ENCODE measurements at regions of chr2 and their contacts with region 1.

Region 1: DNA sequence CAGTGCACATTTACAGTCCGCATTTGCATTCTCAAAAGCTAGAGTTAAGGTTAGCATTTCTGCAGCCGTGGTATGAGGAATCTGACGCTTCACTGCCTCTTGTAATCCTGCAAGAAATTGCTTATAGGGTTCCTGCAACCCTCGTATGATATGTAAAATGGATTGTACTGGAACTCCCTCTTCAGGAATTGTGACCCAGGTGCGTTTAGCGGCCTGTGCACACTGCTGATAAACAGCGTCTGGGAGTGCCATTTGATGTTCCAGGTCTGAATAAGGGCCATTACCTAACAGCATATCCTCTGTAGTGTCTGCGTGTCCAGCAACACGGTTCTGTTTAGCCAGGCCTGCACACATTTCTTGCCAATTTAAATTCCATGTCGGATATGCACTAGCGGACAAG is 42.5 kb downstream of the CXCR4 start:
- DNase-seq: no peak
- ATAC-seq: no peak
- H3K4me3 ChIP-seq: no peak overlapping the region
- H3K27ac ChIP-seq: no peak overlapping the region
- H3K4me1 ChIP-seq: no peaks in the 10 kb centered on the region
- H3K27me3 ChIP-seq: no peaks in the 10 kb centered on the region
- CTCF ChIP-seq: no peak
- EP300 ChIP-seq: no peak
- POLR2A ChIP-seq: no peak
- RAD21 ChIP-seq: no peak

Region 2: GRCh38 chr2:135974036-135974435 is 101.4 kb before region 1 on chr2:
- CTCF ChIA-PET with region 1: no interaction called
- POLR2A ChIA-PET with region 1: no interaction called
- RAD21 ChIA-PET with region 1: no interaction called
- SMC1A ChIA-PET with region 1: no interaction called
- in situ Hi-C with region 1: no loop called
- intact Hi-C with region 1: no loop called
- DNase-seq: no peak
- ATAC-seq: no peak
- H3K4me3 ChIP-seq: no peak overlapping the region
- H3K27ac ChIP-seq: no peak overlapping the region
- H3K4me1 ChIP-seq: no peaks in the 10 kb centered on the region
- H3K27me3 ChIP-seq: no peaks in the 10 kb centered on the region
- CTCF ChIP-seq: no peak
- EP300 ChIP-seq: no peak
- POLR2A ChIP-seq: no peak
- RAD21 ChIP-seq: no peak

Region 3: DNA sequence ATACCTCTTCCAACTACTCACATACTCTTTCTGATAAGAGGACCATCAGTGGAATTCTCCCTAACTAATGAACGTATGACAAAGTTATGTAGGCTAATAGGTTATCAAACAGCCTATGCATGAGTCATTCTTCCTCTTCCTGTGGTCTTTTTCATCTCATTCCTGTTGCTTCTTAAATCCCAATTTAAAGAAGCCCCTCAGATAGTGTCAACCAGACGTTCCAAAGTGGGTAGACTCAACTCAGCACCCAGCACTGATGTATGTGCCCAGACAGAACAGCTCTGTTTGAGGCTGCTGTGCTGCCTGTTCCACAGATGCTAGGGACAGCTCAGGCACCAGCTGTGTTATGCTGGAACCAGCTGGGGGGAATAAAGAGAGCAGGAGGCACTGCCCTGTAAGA is 10.1 kb before region 1 on chr2:
- CTCF ChIA-PET with region 1: interaction called, 4 read pairs
- POLR2A ChIA-PET with region 1: interaction called, 39 read pairs
- RAD21 ChIA-PET with region 1: interaction called, 57 read pairs
- SMC1A ChIA-PET with region 1: interaction called, 113 read pairs
- in situ Hi-C with region 1: no loop called
- intact Hi-C with region 1: no loop called
- DNase-seq: no peak
- ATAC-seq: peak; percentile 66
- H3K4me3 ChIP-seq: no peak overlapping the region
- H3K27ac ChIP-seq: no peak overlapping the region
- H3K4me1 ChIP-seq: peaks cover 12% of the 10 kb centered on the region
- H3K27me3 ChIP-seq: peaks cover 0 to 3% of the 10 kb centered on the region in 2 experiments; a peak in 1 of 4 replicates
- CTCF ChIP-seq: no peak
- EP300 ChIP-seq: no peak
- POLR2A ChIP-seq: no peak
- RAD21 ChIP-seq: no peak

Region 4: DNA sequence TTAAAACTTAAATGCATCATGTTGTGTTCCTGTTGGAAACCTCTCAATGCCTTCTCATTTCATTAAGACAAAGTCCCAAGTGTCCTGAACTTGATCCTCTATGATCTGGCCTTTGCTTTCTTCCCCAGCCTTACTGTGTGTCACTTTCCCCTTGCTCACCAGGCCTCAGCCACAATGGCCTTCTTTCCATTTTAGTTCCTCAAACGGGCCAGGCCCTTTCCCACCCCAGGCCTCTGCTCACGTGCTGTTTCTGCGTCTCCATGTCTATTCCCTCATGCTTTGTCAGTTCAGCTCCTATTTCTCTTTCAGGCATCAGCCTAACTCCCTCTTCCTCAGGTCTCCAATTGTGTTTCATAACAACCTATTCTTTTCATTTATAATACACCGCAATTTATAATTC is 23.0 kb after region 1 on chr2:
- CTCF ChIA-PET with region 1: no interaction called
- POLR2A ChIA-PET with region 1: interaction called, 3 read pairs
- RAD21 ChIA-PET with region 1: no interaction called
- SMC1A ChIA-PET with region 1: interaction called, 34 read pairs
- in situ Hi-C with region 1: no loop called
- intact Hi-C with region 1: no loop called
- DNase-seq: no peak
- ATAC-seq: no peak
- H3K4me3 ChIP-seq: no peak overlapping the region
- H3K27ac ChIP-seq: no peak overlapping the region
- H3K4me1 ChIP-seq: no peaks in the 10 kb centered on the region
- H3K27me3 ChIP-seq: no peaks in the 10 kb centered on the region
- CTCF ChIP-seq: no peak
- EP300 ChIP-seq: no peak
- POLR2A ChIP-seq: no peak
- RAD21 ChIP-seq: no peak

Measured in GM12878 (cell line).